RWPE1 (cell line): ENCODE measurements at regions of chr9 and their contacts with region 1.

Region 1: GRCh38 chr9:132615774-132616173 is 33.4 kb downstream of the BARHL1 start:
- DNase-seq: no peak
- H3K27ac ChIP-seq: no peak overlapping the region
- CTCF ChIP-seq: no peak

Region 2: GRCh38 chr9:132531187-132531586 is 84.6 kb before region 1 on chr9:
- CTCF ChIA-PET with region 1: no interaction called
- POLR2A ChIA-PET with region 1: no interaction called
- DNase-seq: no peak
- H3K27ac ChIP-seq: no peak overlapping the region
- CTCF ChIP-seq: no peak

Region 3: GRCh38 chr9:132575005-132575609 is 40.7 kb before region 1 on chr9:
- CTCF ChIA-PET with region 1: no interaction called
- POLR2A ChIA-PET with region 1: no interaction called
- DNase-seq: peak; percentile 87
- H3K27ac ChIP-seq: no peak overlapping the region
- CTCF ChIP-seq: peak; percentile 92

Region 4: GRCh38 chr9:132651254-132651653 is 35.5 kb after region 1 on chr9:
- CTCF ChIA-PET with region 1: interaction called, 12 read pairs
- POLR2A ChIA-PET with region 1: no interaction called
- DNase-seq: peak; percentile 51
- H3K27ac ChIP-seq: no peak overlapping the region
- CTCF ChIP-seq: peak; percentile 53